ENCODE measurements at regions of chr6 and their contacts with region 1.

Region 1: DNA sequence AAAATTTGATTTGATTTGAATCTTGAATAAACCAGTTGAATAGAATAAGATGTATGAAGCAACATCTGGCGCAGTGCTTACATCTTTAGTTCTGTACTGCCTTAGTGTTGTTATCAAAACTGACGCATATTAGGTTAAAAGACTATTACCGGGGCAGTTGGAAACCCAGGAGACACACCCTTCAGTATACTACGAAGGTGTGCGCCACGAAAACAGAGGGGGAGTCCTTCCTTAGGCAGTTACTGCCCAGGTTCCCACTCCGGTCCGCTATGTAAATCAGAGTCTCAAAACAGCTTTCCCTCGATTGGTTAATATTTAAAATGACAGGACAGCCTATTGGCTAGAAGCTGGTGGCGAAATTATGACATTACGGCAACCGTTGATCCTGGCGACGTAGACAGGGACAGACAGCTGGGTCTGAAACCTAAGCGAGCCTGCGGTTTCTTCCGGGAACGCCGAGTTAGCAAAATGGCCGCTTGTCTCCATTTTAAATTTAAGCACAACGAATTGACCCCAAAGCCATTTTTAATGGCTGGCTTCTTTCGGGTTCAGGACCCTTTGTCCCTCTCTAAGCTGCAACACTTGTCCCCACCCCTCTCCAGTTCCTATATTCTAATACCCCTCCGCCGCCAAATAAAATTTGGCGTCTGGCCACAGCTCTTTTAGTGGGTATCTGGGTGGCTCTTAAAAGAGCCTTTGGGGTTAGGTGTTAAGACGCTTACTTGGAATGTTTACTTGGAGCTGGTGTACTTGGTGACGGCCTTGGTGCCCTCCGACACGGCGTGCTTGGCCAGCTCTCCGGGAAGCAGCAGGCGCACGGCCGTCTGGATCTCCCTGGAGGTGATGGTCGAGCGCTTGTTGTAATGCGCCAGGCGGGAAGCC is 35.8 kb downstream of the HFE start:
- DNase-seq: peak; percentile 98
- H3K4me3 ChIP-seq: peak overlapping the region; percentile 80 to 94 (median 90)
- H3K27ac ChIP-seq: peak overlapping the region; percentile 96 to 99 (median 98)
- H3K4me1 ChIP-seq: peaks cover 0 to 21% (median 17%) of the 10 kb centered on the region in 4 donors
- H3K27me3 ChIP-seq: no peaks in the 10 kb centered on the region
- CTCF ChIP-seq: no peak
- EP300 ChIP-seq: peak; percentile 72 to 92 (median 89)
- POLR2A ChIP-seq: peak; percentile 84 to 91

Region 2: DNA sequence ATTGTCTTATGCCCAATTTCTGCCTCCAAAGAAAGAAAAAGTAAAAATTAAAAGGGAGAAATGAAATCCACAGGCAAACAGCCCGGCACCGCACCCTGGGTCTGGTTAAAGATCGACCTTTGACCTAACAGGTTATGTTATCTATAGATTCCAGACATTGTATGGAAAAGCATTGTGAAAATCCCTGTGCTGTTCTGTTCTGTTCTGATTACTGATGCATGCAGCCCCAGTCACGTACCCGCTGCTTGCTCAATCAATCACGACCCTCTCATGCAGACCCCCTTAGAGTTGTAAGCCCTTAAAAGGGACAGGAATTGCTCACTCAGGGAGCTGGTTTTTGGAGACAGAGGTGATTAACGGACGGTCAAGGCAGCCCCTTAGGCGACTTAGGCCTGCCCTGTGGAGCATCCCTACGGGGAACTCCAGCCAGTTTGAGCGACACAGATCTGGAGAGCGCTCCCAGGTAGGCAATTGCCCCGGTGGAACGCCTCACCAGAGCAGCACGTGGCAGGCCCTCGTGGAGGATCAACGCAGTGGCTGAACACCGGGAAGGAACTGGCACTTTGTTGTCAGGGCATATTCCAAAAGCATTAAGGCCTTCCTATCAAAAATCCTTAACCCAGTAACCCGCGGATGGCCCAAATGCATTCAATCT is 47.8 kb before region 1 on chr6:
- intact Hi-C with region 1: no loop called
- DNase-seq: no peak
- H3K4me3 ChIP-seq: no peak overlapping the region
- H3K27ac ChIP-seq: no peak overlapping the region
- H3K4me1 ChIP-seq: no peaks in the 10 kb centered on the region
- H3K27me3 ChIP-seq: no peaks in the 10 kb centered on the region
- CTCF ChIP-seq: no peak
- EP300 ChIP-seq: no peak
- POLR2A ChIP-seq: no peak

Region 3: GRCh38 chr6:26087284-26088115 is 35.5 kb before region 1 on chr6 and contains the start of gene HFE:
- intact Hi-C with region 1: loop called (anchors 2 kb)
- DNase-seq: peak; percentile 81
- H3K4me3 ChIP-seq: peak within 1 kb of the TSS; percentile 50 to 71 (median 57)
- H3K27ac ChIP-seq: peak within 1 kb of the TSS; percentile 90 to 97 (median 92)
- H3K4me1 ChIP-seq: peaks cover 0 to 31% (median 26%) of the 10 kb centered on the region in 4 donors
- H3K27me3 ChIP-seq: no peaks in the 10 kb centered on the region
- CTCF ChIP-seq: no peak
- EP300 ChIP-seq: no peak
- POLR2A ChIP-seq: peak in 1 of 2 donors; percentile 14
- total RNA-seq, gene HFE: 4.4 to 7.8 (median 4.9) TPM

Region 4: DNA sequence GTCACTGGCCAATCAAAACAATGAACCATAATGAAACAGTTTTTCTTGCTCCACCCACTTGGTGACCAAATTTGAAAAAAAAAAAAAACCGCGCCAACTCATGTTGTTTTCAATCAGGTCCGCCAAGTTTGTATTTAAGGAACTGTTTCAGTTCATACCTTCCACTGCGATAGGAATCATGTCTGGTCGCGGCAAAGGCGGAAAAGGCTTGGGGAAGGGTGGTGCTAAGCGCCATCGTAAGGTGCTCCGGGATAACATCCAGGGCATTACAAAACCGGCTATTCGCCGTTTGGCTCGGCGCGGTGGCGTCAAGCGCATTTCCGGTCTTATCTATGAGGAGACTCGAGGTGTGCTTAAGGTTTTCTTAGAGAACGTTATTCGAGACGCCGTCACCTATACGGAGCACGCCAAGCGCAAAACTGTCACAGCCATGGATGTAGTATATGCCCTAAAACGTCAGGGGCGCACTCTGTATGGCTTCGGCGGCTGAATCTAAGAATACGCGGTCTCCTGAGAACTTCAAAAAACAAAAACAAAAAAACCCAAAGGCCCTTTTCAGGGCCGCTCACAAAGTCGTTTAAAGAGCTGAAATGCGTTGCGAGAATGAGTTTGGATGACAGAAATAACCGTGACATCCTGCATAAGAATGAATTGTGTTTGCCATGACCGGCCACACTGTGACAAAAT is 19.1 kb before region 1 on chr6:
- intact Hi-C with region 1: loop called (anchors 1 kb)
- DNase-seq: peak; percentile 97
- H3K4me3 ChIP-seq: peak overlapping the region; percentile 34 to 58 (median 52)
- H3K27ac ChIP-seq: peak overlapping the region; percentile 82 to 92 (median 90)
- H3K4me1 ChIP-seq: peaks cover 0 to 12% (median 11%) of the 10 kb centered on the region in 4 donors
- H3K27me3 ChIP-seq: no peaks in the 10 kb centered on the region
- CTCF ChIP-seq: peak; percentile 38 to 49 (median 42)
- EP300 ChIP-seq: peak in 2 of 4 donors; percentile 19 to 63
- POLR2A ChIP-seq: peak; percentile 97 to 99

Region 5: DNA sequence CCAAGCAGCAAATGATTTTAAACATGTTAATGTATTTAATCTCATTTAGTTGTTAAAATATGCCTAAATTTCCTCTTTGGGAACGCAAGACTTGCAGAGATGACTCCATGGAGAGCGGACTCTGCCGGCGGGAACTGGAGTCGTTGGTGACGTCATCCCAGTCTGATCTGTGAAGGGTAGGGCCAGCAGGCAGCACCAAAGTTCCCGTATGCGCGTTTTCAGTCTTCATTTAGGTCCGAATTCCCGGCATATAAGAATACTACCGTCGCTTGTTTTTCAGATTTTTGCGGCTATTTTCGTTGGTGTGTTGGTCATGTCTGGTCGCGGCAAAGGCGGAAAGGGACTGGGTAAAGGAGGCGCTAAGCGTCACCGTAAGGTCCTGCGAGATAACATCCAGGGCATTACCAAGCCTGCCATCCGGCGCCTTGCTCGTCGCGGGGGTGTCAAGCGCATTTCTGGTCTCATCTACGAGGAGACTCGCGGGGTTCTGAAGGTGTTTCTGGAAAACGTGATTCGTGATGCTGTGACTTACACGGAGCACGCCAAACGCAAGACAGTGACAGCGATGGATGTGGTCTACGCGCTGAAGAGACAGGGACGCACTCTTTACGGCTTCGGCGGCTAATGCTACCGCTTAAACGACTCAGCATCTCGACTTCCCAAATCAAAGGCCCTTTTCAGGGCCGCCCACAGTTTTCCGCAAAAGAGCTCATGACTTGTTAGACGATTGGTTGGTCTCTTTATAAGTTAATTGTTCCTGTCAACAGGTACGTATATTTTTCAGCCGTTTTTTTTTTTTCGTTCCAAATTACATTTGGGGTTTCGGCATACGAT is 81.5 kb after region 1 on chr6:
- intact Hi-C with region 1: loop called (anchors 2 kb)
- DNase-seq: peak; percentile 99
- H3K4me3 ChIP-seq: peak overlapping the region; percentile 61 to 75 (median 65)
- H3K27ac ChIP-seq: peak overlapping the region; percentile 95 to 98 (median 98)
- H3K4me1 ChIP-seq: peaks cover 0 to 29% (median 16%) of the 10 kb centered on the region in 4 donors
- H3K27me3 ChIP-seq: no peaks in the 10 kb centered on the region
- CTCF ChIP-seq: peak in 2 of 4 experiments; percentile 8 to 34
- EP300 ChIP-seq: peak in 3 of 4 donors; percentile 67 to 81 (median 81)
- POLR2A ChIP-seq: peak; percentile 99

Region 6: GRCh38 chr6:26216356-26216885 is 93.4 kb after region 1 on chr6:
- intact Hi-C with region 1: loop called (anchors 5 kb)
- DNase-seq: peak; percentile 93
- H3K4me3 ChIP-seq: peak overlapping the region; percentile 46 to 59 (median 50)
- H3K27ac ChIP-seq: peak overlapping the region; percentile 88 to 97 (median 94)
- H3K4me1 ChIP-seq: peaks cover 0 to 26% (median 23%) of the 10 kb centered on the region in 4 donors
- H3K27me3 ChIP-seq: no peaks in the 10 kb centered on the region
- CTCF ChIP-seq: no peak
- EP300 ChIP-seq: peak in 2 of 4 donors; percentile 41 to 86
- POLR2A ChIP-seq: peak; percentile 97 to 99